Panc1 (cell line): ENCODE measurements at regions of chr5 and their contacts with region 1.

Region 1: DNA sequence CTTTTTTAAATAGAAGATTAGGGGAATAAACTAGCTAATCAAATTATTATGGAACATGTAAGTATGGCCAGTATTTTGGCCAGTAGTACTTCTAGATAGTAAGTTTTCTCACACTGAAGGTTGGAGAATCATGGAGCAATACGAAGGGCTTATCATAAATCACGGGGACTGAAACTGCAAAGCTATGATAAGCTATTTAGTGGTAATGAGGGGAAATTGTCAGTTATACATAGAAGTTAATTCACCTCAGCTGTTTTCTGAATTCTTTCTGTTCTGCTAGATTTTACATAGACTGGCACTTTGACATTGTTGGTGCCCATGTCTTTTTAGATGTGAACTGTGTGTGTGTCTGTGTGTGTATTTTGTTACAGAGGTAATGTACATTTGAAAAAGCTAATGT is 34.5 kb upstream of the FAM151B start:
- DNase-seq: no peak
- ATAC-seq: no peak
- H3K4me3 ChIP-seq: no peak overlapping the region
- H3K27ac ChIP-seq: no peak overlapping the region
- H3K4me1 ChIP-seq: no peaks in the 10 kb centered on the region
- H3K27me3 ChIP-seq: no peaks in the 10 kb centered on the region
- CTCF ChIP-seq: no peak

Region 2: DNA sequence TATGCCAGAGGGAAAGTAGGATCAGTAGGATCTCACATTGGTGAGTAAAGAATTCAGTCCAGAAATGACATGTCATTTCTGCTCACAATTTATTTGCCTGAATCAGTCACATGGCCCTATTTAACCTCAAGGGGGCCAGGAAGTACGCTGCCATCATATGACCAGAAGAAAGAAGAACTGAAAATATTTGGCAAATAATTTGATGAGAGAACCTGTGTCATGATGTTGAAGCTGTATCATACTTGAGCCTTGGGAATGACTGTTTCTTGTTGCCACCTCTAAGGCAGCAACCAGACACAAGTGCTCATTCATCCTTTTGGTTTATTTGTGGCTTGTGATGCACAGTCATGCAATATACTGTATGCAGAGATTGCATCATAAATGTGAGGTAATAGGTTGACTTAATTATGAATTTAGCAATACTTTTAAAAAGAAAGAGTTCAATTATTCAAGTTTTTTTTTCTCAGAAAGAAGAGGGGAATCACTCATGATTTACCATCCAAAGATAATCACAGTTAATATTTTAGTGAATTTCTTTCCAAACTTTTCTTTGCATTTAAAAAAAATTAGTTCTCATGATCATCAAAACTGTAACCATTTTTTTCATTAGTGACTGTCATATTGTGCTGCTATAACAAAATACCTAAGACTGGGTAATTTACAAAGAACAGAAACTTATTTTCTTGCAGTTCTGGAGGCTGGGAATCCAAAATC is 53.7 kb before region 1 on chr5:
- CTCF ChIA-PET with region 1: interaction called, 10 read pairs
- POLR2A ChIA-PET with region 1: no interaction called
- in situ Hi-C with region 1: no loop called
- intact Hi-C with region 1: no loop called
- DNase-seq: peak; percentile 39
- ATAC-seq: no peak
- H3K4me3 ChIP-seq: no peak overlapping the region
- H3K27ac ChIP-seq: no peak overlapping the region; the same call in 1 of the 2 replicates
- H3K4me1 ChIP-seq: no peaks in the 10 kb centered on the region
- H3K27me3 ChIP-seq: no peaks in the 10 kb centered on the region
- CTCF ChIP-seq: no peak